Naive thymus-derived CD4-positive, alpha-beta T cell (primary cell): ENCODE measurements at regions of chr7 and their contacts with region 1.

Region 1: GRCh38 chr7:96321658-96322372 is at the start of gene SLC25A13:
- DNase-seq: peak; percentile 46 to 78 (median 62)
- ATAC-seq: peak; percentile 88
- H3K4me3 ChIP-seq: peak within 1 kb of the TSS; percentile 77
- H3K4me3 Mint-ChIP-seq: peak within 1 kb of the TSS; percentile 88 to 95 (median 92)
- H3K27ac ChIP-seq: peak within 1 kb of the TSS; percentile 80
- H3K27ac Mint-ChIP-seq: peak within 1 kb of the TSS; percentile 81 to 94 (median 93)
- H3K4me1 ChIP-seq: peaks cover 12 to 14% of the 10 kb centered on the region in 2 donors
- H3K4me1 Mint-ChIP-seq: peaks cover 17 to 36% (median 24%) of the 10 kb centered on the region in 7 donors
- H3K27me3 ChIP-seq: no peaks in the 10 kb centered on the region
- H3K27me3 Mint-ChIP-seq: no peaks in the 10 kb centered on the region
- total RNA-seq, gene SLC25A13: 5.7 to 22.5 (median 12.1) TPM

Region 2: GRCh38 chr7:96285579-96285978 is 36.2 kb before region 1 on chr7:
- CTCF ChIA-PET with region 1: no interaction called
- POLR2A ChIA-PET with region 1: no interaction called
- intact Hi-C with region 1: loop called (anchors 1 kb)
- DNase-seq: peak in 8 of 9 donors; percentile 26 to 85 (median 78)
- ATAC-seq: peak; percentile 95
- H3K4me3 ChIP-seq: peak overlapping the region; percentile 3
- H3K4me3 Mint-ChIP-seq: peak overlapping the region; percentile 48 to 87 (median 74)
- H3K27ac ChIP-seq: peak overlapping the region; percentile 41
- H3K27ac Mint-ChIP-seq: peak overlapping the region; percentile 81 to 99 (median 94)
- H3K4me1 ChIP-seq: peaks cover 21 to 25% of the 10 kb centered on the region in 2 donors
- H3K4me1 Mint-ChIP-seq: peaks cover 29 to 56% (median 46%) of the 10 kb centered on the region in 7 donors
- H3K27me3 ChIP-seq: no peaks in the 10 kb centered on the region
- H3K27me3 Mint-ChIP-seq: no peaks in the 10 kb centered on the region

Region 3: GRCh38 chr7:96479015-96479645 is 157.3 kb after region 1 on chr7:
- CTCF ChIA-PET with region 1: no interaction called
- POLR2A ChIA-PET with region 1: no interaction called
- intact Hi-C with region 1: loop called in 1 of 2 experiments (anchors 10 kb)
- DNase-seq: peak in 3 of 9 donors; percentile 1 to 13 (median 5)
- ATAC-seq: no peak
- H3K4me3 ChIP-seq: peak overlapping the region; percentile 46
- H3K4me3 Mint-ChIP-seq: peak overlapping the region in 9 of 10 donors; percentile 41 to 86 (median 73)
- H3K27ac ChIP-seq: no peak overlapping the region
- H3K27ac Mint-ChIP-seq: peak overlapping the region; percentile 46 to 93 (median 79)
- H3K4me1 ChIP-seq: no peaks in the 10 kb centered on the region
- H3K4me1 Mint-ChIP-seq: peaks cover 11 to 26% (median 16%) of the 10 kb centered on the region in 7 donors
- H3K27me3 ChIP-seq: no peaks in the 10 kb centered on the region
- H3K27me3 Mint-ChIP-seq: peaks cover 0 to 8% (median 0%) of the 10 kb centered on the region in 5 donors

Region 4: GRCh38 chr7:96837593-96837992 is 515.8 kb after region 1 on chr7:
- CTCF ChIA-PET with region 1: interaction called, 4 read pairs
- POLR2A ChIA-PET with region 1: no interaction called
- intact Hi-C with region 1: loop called in 1 of 2 experiments (anchors 5 kb)
- DNase-seq: peak in 8 of 9 donors; percentile 22 to 81 (median 70)
- ATAC-seq: peak; percentile 91
- H3K4me3 ChIP-seq: no peak overlapping the region
- H3K4me3 Mint-ChIP-seq: peak overlapping the region; percentile 5 to 85 (median 76)
- H3K27ac ChIP-seq: no peak overlapping the region
- H3K27ac Mint-ChIP-seq: peak overlapping the region in 4 of 9 donors; percentile 6 to 60 (median 28)
- H3K4me1 ChIP-seq: peaks cover 16 to 26% of the 10 kb centered on the region in 2 donors
- H3K4me1 Mint-ChIP-seq: peaks cover 21 to 46% (median 35%) of the 10 kb centered on the region in 7 donors
- H3K27me3 ChIP-seq: no peaks in the 10 kb centered on the region
- H3K27me3 Mint-ChIP-seq: peaks cover 17 to 58% (median 41%) of the 10 kb centered on the region in 5 donors

Region 5: GRCh38 chr7:96887426-96887825 is 565.6 kb after region 1 on chr7:
- CTCF ChIA-PET with region 1: no interaction called
- POLR2A ChIA-PET with region 1: no interaction called
- intact Hi-C with region 1: no loop called
- DNase-seq: no peak
- ATAC-seq: no peak
- H3K4me3 ChIP-seq: no peak overlapping the region
- H3K4me3 Mint-ChIP-seq: no peak overlapping the region
- H3K27ac ChIP-seq: no peak overlapping the region
- H3K27ac Mint-ChIP-seq: no peak overlapping the region
- H3K4me1 ChIP-seq: no peaks in the 10 kb centered on the region
- H3K4me1 Mint-ChIP-seq: no peaks in the 10 kb centered on the region
- H3K27me3 ChIP-seq: no peaks in the 10 kb centered on the region
- H3K27me3 Mint-ChIP-seq: peaks cover 0 to 11% (median 3%) of the 10 kb centered on the region in 5 donors

Region 6: GRCh38 chr7:98106647-98107445 is 1785.0 kb after region 1 on chr7 and contains the start of gene LMTK2:
- CTCF ChIA-PET with region 1: no interaction called
- POLR2A ChIA-PET with region 1: no interaction called
- intact Hi-C with region 1: loop called in 1 of 2 experiments (anchors 2 kb)
- DNase-seq: peak; percentile 92 to 100 (median 97)
- ATAC-seq: peak; percentile 100
- H3K4me3 ChIP-seq: peak within 1 kb of the TSS; percentile 66
- H3K4me3 Mint-ChIP-seq: peak within 1 kb of the TSS; percentile 90 to 99 (median 96)
- H3K27ac ChIP-seq: peak within 1 kb of the TSS; percentile 92
- H3K27ac Mint-ChIP-seq: peak within 1 kb of the TSS; percentile 22 to 97 (median 89)
- H3K4me1 ChIP-seq: peaks cover 10 to 26% of the 10 kb centered on the region in 2 donors
- H3K4me1 Mint-ChIP-seq: peaks cover 23 to 51% (median 48%) of the 10 kb centered on the region in 7 donors
- H3K27me3 ChIP-seq: no peaks in the 10 kb centered on the region
- H3K27me3 Mint-ChIP-seq: peaks cover 0 to 12% (median 7%) of the 10 kb centered on the region in 5 donors
- total RNA-seq, gene LMTK2: 13.2 to 29.1 (median 25.9) TPM